ENCODE measurements at regions of chr9 and their contacts with region 1.

Region 1: DNA sequence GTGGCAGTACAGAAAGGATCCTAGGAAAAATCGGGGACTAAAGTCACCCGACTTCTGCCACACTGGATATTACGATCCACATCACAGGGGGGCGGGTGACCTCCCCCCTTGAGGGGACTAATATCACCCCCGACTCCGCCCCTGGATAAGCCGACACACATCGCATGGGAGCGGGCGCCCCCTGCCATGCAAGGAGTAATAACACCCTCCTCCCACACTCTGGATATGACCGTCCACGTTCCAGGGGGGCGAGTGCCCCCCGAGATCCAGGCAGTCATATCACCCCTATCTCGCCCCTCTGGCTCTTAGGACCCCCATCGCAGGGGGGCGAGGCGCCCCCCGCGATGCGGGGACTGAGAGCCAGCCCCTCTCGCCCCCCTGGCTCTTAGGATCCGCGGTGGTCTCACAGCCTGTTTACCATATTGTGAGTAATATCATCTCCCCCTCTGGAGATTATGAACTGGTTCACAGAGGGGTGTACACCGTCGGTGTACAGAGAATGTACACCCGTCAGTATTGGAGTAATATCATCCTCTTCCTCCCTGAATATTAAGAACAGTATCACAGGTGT is 423.0 kb downstream of the DIRAS2 start:
- DNase-seq: no peak
- H3K4me3 ChIP-seq: no peak overlapping the region
- H3K27ac ChIP-seq: no peak overlapping the region
- H3K4me1 ChIP-seq: no peaks in the 10 kb centered on the region
- H3K27me3 ChIP-seq: no peaks in the 10 kb centered on the region
- CTCF ChIP-seq: peak in 1 of 2 donors; percentile 24

Region 2: DNA sequence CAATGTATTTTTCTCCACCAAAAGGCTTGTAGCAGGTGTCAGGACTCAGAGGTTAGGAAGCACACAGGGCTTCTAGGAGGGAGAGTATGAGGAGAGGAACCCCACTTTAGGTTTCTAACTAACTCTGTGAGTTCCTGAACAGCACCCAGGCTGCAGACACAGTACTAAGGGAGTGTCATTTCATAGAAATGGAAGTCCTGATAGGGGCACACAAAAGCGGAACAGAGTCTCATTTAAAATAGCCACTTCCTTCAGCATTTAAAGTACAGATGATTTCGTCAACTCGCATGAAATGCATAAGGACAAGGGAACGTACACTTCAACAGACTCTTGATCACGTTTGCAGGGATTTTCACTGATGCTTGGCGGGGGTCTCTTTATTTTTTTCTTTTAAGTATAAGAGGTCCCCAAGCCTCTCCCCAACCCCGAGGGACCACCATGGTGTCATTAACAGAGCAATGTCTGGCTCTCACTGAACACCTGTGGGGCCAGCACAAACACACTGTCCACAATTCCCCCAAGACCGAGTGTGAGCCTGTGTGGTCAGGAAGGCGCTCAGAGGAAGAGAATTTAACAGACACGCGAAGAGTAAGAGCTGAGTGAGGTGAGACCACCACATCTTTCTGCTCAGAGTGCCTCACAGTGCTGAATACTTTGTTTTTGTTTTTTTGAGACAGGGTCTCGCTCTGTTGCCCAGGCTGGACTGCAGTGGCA is 819.1 kb before region 1 on chr9:
- CTCF ChIA-PET with region 1: no interaction called
- dilution Hi-C with region 1: no loop called
- in situ Hi-C with region 1: no loop called
- intact Hi-C with region 1: no loop called
- DNase-seq: no peak
- H3K4me3 ChIP-seq: no peak overlapping the region
- H3K27ac ChIP-seq: no peak overlapping the region
- H3K4me1 ChIP-seq: no peaks in the 10 kb centered on the region
- H3K27me3 ChIP-seq: no peaks in the 10 kb centered on the region
- CTCF ChIP-seq: no peak

Region 3: DNA sequence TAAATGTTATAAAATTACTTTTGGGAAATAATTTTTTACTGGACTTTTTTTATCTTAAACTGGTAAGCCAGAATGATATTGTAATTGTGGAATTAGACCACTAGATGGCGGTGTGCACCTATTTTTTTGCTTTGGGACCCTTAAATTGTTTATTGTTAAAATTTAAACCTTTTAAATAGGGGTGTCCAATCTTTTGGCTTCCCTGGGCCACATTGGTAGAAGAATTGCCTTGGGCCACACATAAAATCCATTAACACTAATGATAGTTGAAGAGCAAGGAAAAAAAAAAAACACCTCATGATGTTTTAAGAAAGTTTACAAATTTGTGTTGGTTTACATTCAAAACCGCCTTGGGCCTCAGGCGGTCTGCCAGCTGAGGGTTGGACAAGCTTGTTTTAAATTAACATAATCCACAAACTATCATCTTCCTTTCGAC is 643.2 kb before region 1 on chr9:
- CTCF ChIA-PET with region 1: no interaction called
- dilution Hi-C with region 1: no loop called
- in situ Hi-C with region 1: no loop called
- intact Hi-C with region 1: loop called (anchors 5 kb)
- DNase-seq: no peak
- H3K4me3 ChIP-seq: no peak overlapping the region
- H3K27ac ChIP-seq: no peak overlapping the region
- H3K4me1 ChIP-seq: no peaks in the 10 kb centered on the region
- H3K27me3 ChIP-seq: no peaks in the 10 kb centered on the region
- CTCF ChIP-seq: peak; percentile 52 to 60

Region 4: DNA sequence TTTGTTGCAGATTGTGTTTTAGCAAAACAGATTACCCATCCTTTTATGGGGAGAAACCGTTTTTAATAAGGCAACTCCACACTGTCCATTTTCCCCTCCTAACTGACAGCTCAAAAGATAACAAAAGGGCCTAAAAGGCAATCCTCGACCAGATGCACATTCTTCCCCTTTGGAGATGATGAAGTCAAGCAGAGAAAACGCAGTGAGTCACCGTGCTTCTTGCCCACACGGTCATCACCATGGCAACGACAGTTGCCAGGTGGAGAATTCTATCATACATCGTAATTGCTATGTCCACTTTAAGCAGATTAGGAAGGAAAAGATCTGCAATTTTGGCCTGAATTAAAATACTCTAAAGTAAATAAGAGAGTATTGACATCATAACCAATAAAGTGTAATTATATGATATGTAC is 326.6 kb after region 1 on chr9:
- CTCF ChIA-PET with region 1: no interaction called
- dilution Hi-C with region 1: no loop called
- in situ Hi-C with region 1: no loop called
- intact Hi-C with region 1: no loop called
- DNase-seq: peak; percentile 78
- H3K4me3 ChIP-seq: no peak overlapping the region
- H3K27ac ChIP-seq: no peak overlapping the region
- H3K4me1 ChIP-seq: no peaks in the 10 kb centered on the region
- H3K27me3 ChIP-seq: no peaks in the 10 kb centered on the region
- CTCF ChIP-seq: no peak

Region 5: GRCh38 chr9:90726215-90726614 is 506.6 kb after region 1 on chr9:
- CTCF ChIA-PET with region 1: no interaction called
- dilution Hi-C with region 1: no loop called
- in situ Hi-C with region 1: loop called in 1 of 2 experiments (anchors 25 kb)
- intact Hi-C with region 1: no loop called
- DNase-seq: no peak
- H3K4me3 ChIP-seq: no peak overlapping the region
- H3K27ac ChIP-seq: no peak overlapping the region
- H3K4me1 ChIP-seq: no peaks in the 10 kb centered on the region
- H3K27me3 ChIP-seq: no peaks in the 10 kb centered on the region
- CTCF ChIP-seq: peak in 1 of 2 donors; percentile 8